Naive thymus-derived CD4-positive, alpha-beta T cell (primary cell): ENCODE measurements at regions of chr18 and their contacts with region 1.

Region 1: GRCh38 chr18:55415258-55415871 is 172.6 kb downstream of the TCF4 start:
- DNase-seq: peak; percentile 21 to 66 (median 49)
- ATAC-seq: peak; percentile 78
- H3K4me3 ChIP-seq: no peak overlapping the region
- H3K4me3 Mint-ChIP-seq: no peak overlapping the region
- H3K27ac ChIP-seq: no peak overlapping the region
- H3K27ac Mint-ChIP-seq: no peak overlapping the region
- H3K4me1 ChIP-seq: no peaks in the 10 kb centered on the region
- H3K4me1 Mint-ChIP-seq: peaks cover 0 to 7% (median 2%) of the 10 kb centered on the region in 7 donors
- H3K27me3 ChIP-seq: no peaks in the 10 kb centered on the region
- H3K27me3 Mint-ChIP-seq: peaks cover 0 to 17% (median 0%) of the 10 kb centered on the region in 5 donors

Region 2: GRCh38 chr18:55522011-55522410 is 106.6 kb after region 1 on chr18:
- CTCF ChIA-PET with region 1: no interaction called
- POLR2A ChIA-PET with region 1: no interaction called
- intact Hi-C with region 1: loop called in 1 of 2 experiments (anchors 1 kb)
- DNase-seq: no peak
- ATAC-seq: no peak
- H3K4me3 ChIP-seq: no peak overlapping the region
- H3K4me3 Mint-ChIP-seq: no peak overlapping the region
- H3K27ac ChIP-seq: no peak overlapping the region
- H3K27ac Mint-ChIP-seq: no peak overlapping the region
- H3K4me1 ChIP-seq: no peaks in the 10 kb centered on the region
- H3K4me1 Mint-ChIP-seq: no peaks in the 10 kb centered on the region
- H3K27me3 ChIP-seq: no peaks in the 10 kb centered on the region
- H3K27me3 Mint-ChIP-seq: peaks cover 0 to 2% (median 0%) of the 10 kb centered on the region in 5 donors

Region 3: DNA sequence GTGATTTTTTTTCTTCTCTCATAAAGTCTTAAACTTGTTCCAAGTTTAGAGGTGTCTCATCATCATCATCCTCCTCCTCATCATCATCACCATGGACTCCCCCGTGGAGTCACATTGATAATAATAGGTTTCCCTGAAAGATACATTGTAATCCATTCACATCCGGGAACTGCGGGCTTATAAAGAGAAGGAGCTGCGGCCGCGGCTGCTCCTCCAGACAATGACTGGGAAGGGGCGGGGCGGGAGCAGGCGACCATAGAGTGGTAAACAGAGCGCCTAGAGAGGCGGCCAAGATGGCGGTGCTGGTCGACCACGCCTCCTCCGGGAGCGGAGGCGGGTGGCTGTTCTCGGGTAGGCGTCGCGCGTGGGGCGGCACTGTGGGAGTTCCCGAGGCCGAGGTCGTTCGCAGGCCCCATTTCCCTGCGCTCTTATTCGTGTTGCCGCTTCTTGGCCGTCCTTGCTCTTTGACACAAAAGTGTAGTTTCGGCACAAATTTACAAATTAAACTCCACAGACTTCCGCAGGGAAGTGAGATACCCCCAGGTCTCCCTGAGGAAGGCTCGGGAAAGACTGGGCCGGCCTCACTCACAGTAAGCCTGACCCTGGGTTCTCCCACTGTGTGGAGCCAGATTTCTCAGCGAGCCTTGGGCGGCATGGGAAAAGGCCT is 174.4 kb after region 1 on chr18:
- CTCF ChIA-PET with region 1: no interaction called
- POLR2A ChIA-PET with region 1: no interaction called
- intact Hi-C with region 1: loop called in 1 of 2 experiments (anchors 5 kb)
- DNase-seq: peak; percentile 61 to 89 (median 77)
- ATAC-seq: peak; percentile 97
- H3K4me3 ChIP-seq: peak overlapping the region; percentile 25
- H3K4me3 Mint-ChIP-seq: peak overlapping the region; percentile 82 to 94 (median 89)
- H3K27ac ChIP-seq: peak overlapping the region; percentile 53
- H3K27ac Mint-ChIP-seq: peak overlapping the region; percentile 25 to 86 (median 75)
- H3K4me1 ChIP-seq: no peaks in the 10 kb centered on the region
- H3K4me1 Mint-ChIP-seq: peaks cover 12 to 42% (median 36%) of the 10 kb centered on the region in 7 donors
- H3K27me3 ChIP-seq: peaks cover 0 to 8% of the 10 kb centered on the region in 2 donors
- H3K27me3 Mint-ChIP-seq: peaks cover 38 to 70% (median 48%) of the 10 kb centered on the region in 5 donors